ENCODE measurements at regions of chr3 and their contacts with region 1.

Region 1: GRCh38 chr3:87082796-87083440 is 92.0 kb upstream of the VGLL3 start:
- DNase-seq: no peak
- ATAC-seq: peak; percentile 75

Region 2: GRCh38 chr3:86774082-86774691 is 308.7 kb before region 1 on chr3:
- intact Hi-C with region 1: loop called in 1 of 2 experiments (anchors 2 kb)
- DNase-seq: no peak
- ATAC-seq: no peak

Region 3: DNA sequence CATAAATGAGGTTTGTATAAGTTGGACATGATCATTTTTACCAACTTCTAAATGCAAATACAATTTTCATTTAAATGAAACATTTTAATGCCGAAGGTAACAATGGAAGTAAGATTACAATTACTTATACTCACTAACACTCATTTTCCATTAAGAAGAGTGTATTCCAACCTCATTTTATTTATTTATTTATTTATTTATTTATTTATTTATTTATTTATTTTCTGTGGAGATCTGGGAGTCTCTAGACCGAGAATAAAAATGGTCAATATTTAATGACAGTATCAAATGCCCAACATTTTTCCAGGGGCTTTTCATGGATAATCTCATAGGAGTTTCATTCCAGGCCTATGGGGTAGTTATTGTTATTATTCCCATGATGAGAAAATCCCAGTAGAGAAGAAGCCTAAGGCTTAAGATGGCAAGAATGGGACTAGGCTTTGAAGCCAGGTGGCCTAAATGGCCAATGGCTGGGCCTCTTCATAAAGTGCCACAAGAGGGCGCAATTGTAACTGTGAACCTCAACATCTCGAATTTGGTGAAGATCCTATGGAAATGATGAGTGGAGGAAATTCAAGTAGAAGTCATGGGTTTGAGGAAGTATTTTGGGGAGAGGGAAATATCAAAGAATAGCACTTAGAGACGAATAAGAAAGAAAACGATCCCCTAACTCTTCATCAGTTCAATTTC is 113.3 kb before region 1 on chr3:
- intact Hi-C with region 1: loop called in 1 of 2 experiments (anchors 10 kb)
- DNase-seq: peak in 1 of 2 donors; percentile 24
- ATAC-seq: no peak

Region 4: GRCh38 chr3:87161417-87161816 is 78.5 kb after region 1 on chr3:
- intact Hi-C with region 1: no loop called
- DNase-seq: no peak
- ATAC-seq: no peak